K562 (cell line): ENCODE measurements at regions of chr12 and their contacts with region 1.

Region 1: GRCh38 chr12:110280779-110281548 is at the start of gene ATP2A2:
- DNase-seq: peak; percentile 95 to 96 (median 96)
- ATAC-seq: peak; percentile 85
- H3K4me3 ChIP-seq: peak within 1 kb of the TSS; percentile 87
- H3K27ac ChIP-seq: peak within 1 kb of the TSS; percentile 96
- H3K4me1 ChIP-seq: peaks cover 19 to 22% of the 10 kb centered on the region in 2 experiments; a peak in 4 of 5 replicates
- H3K27me3 ChIP-seq: no peaks in the 10 kb centered on the region
- CTCF ChIP-seq: no peak
- EP300 ChIP-seq: no peak
- POLR2A ChIP-seq: peak; percentile 89
- RAD21 ChIP-seq: no peak
- polyA plus RNA-seq, gene ATP2A2: 5.2 to 6.7 TPM

Region 2: GRCh38 chr12:110224379-110225304 is 56.3 kb before region 1 on chr12:
- CTCF ChIA-PET with region 1: no interaction called
- POLR2A ChIA-PET with region 1: no interaction called
- in situ Hi-C with region 1: no loop called
- intact Hi-C with region 1: loop called (anchors 5 kb)
- DNase-seq: peak in 2 of 4 experiments; percentile 22 to 23
- ATAC-seq: no peak; the same call in 2 of the 3 replicates
- H3K4me3 ChIP-seq: no peak overlapping the region
- H3K27ac ChIP-seq: no peak overlapping the region
- H3K4me1 ChIP-seq: no peaks in the 10 kb centered on the region
- H3K27me3 ChIP-seq: no peaks in the 10 kb centered on the region
- CTCF ChIP-seq: peak; percentile 41 to 61 (median 55); a peak in 5 of 6 replicates
- EP300 ChIP-seq: no peak
- POLR2A ChIP-seq: no peak
- RAD21 ChIP-seq: peak; percentile 19 to 54; a peak in 2 of 4 replicates

Region 3: DNA sequence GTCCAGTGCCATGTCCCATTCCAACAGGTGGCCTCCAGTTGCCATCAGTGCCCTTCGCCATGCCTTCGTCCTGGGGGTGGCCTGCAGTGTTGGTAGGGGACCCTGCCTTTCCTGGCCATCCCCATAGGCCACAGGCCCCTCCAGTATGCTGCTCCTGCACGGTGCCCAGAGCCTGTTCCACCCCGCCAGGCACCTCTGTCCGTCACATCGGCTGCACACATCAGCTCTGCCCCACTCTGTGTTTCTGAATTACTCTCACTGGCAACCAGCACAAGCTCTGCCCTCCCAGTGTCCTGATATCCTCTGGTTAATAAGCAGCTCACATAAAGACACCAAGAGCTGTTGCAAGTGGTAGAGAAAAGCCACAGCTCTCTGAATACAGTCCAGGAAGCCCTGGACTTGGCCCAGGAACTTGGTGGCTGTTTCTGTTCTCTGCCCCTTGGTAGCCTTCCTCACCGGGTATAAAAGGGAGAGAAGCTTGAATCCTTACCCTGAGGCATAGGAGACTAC is 31.2 kb before region 1 on chr12:
- CTCF ChIA-PET with region 1: no interaction called
- POLR2A ChIA-PET with region 1: interaction called, 12 read pairs
- in situ Hi-C with region 1: no loop called
- intact Hi-C with region 1: no loop called
- DNase-seq: no peak
- ATAC-seq: no peak
- H3K4me3 ChIP-seq: no peak overlapping the region
- H3K27ac ChIP-seq: no peak overlapping the region
- H3K4me1 ChIP-seq: peaks cover 5 to 9% of the 10 kb centered on the region in 2 experiments; a peak in 3 of 5 replicates
- H3K27me3 ChIP-seq: no peaks in the 10 kb centered on the region
- CTCF ChIP-seq: no peak
- EP300 ChIP-seq: no peak
- POLR2A ChIP-seq: no peak
- RAD21 ChIP-seq: no peak

Region 4: DNA sequence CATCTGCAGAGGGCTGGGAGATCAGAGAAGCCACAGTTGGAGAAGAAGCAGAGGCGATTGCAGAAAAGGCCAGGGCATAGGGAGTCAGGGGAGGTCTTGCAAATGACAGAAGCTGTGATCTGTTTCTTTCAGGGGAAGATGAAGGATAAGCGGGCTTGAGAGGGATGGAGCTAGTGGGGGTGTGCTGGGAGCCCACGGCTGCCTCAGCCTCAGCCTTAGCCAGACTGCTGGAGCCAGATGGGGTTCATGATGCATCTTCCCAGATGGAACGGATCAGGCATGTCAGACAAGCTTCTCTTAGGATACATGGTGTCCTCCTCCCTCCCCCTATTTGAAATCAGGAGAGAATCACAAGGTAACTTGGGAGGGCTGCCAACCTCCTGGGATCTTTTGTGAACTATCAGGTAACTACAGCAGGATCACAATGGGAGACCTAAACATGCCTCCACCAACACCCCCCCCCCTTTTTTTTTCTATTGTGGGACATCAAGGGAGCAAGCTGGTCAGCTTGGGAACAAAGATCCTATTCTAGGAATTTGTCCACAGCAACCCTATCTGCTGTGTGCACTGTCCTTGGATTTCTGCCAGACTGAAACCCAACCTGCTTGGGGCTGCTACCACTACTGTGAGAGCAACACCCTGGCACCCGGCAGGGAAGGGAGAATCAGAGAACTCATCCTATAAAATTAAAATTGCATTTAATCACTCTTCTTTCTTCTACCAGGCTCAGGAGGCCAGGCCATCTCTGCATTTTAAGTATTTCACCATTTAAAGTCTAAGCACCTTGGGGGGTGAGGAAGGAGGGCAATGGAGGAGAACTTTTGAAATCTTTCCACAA is 10.6 kb before region 1 on chr12:
- CTCF ChIA-PET with region 1: no interaction called
- POLR2A ChIA-PET with region 1: interaction called, 48 read pairs
- in situ Hi-C with region 1: no loop called
- intact Hi-C with region 1: no loop called
- DNase-seq: peak; percentile 67 to 90 (median 76)
- ATAC-seq: peak; percentile 64
- H3K4me3 ChIP-seq: 0 out of 2 replicates have a peak overlapping the region, but pooled peaks have one; percentile 2
- H3K27ac ChIP-seq: peak overlapping the region; percentile 6; the same call in 2 of the 3 replicates
- H3K4me1 ChIP-seq: peaks cover 32 to 50% of the 10 kb centered on the region in 2 experiments
- H3K27me3 ChIP-seq: no peaks in the 10 kb centered on the region
- CTCF ChIP-seq: no peak
- EP300 ChIP-seq: peak; percentile 79
- POLR2A ChIP-seq: no peak
- RAD21 ChIP-seq: no peak